ENCODE measurements at regions of chr1 and their contacts with region 1.

Region 1: DNA sequence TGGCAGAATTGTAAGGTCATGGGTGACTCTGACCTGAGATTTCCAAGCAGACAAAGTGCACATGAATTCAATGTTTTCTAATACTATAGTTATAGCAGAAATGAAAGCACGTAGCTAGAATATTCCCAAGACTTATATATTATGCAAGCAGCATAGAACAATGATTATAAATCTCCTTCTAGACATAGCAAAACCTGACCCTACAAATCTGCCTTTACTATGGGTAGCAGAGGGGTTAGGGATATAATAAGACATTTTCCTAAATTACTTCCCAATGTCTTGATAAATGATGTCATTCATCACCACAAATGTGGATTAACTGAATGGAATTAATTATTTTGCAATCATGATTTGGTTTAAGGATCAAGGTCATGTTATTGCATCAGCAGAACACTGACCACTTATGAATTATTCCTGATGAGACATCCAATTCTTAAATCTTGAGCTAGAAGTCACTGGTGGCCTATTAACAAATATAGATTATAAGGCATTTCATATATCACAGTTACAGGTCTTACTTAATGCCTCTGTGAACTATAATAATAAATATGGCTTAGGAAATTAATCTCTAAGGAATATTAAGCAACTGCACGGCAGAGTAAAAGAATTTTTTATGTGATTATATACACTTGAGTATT is 776.6 kb downstream of the AMY1C start:
- DNase-seq: no peak
- ATAC-seq: no peak
- H3K4me3 ChIP-seq: no peak overlapping the region
- H3K27ac ChIP-seq: no peak overlapping the region
- H3K4me1 ChIP-seq: no peaks in the 10 kb centered on the region
- H3K27me3 ChIP-seq: no peaks in the 10 kb centered on the region
- CTCF ChIP-seq: no peak
- EP300 ChIP-seq: no peak
- POLR2A ChIP-seq: no peak
- RAD21 ChIP-seq: no peak

Region 2: DNA sequence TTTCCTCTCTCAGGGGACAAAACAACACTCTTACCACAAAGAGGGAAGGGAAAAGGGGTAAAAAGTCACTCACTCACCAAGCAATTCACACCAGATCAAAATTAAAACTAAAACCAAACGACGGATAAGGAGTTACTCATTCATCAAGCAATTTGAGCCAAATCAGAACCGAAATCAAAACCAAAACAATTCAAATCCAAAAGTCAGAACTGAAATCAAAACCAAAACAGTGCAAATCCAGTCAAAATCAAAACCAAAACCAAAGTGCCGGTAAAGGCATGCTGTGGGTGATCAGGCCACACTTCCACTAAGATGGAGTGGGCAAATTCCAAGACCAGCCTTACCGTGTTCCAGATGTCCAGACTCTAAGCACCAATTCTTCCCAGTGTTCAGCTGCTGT is 58.7 kb before region 1 on chr1:
- CTCF ChIA-PET with region 1: no interaction called
- POLR2A ChIA-PET with region 1: no interaction called
- RAD21 ChIA-PET with region 1: no interaction called
- SMC1A ChIA-PET with region 1: no interaction called
- in situ Hi-C with region 1: no loop called
- intact Hi-C with region 1: no loop called
- DNase-seq: peak; percentile 23
- ATAC-seq: peak; percentile 77
- H3K4me3 ChIP-seq: no peak overlapping the region
- H3K27ac ChIP-seq: no peak overlapping the region
- H3K4me1 ChIP-seq: no peaks in the 10 kb centered on the region
- H3K27me3 ChIP-seq: no peaks in the 10 kb centered on the region
- CTCF ChIP-seq: no peak
- EP300 ChIP-seq: no peak
- POLR2A ChIP-seq: no peak
- RAD21 ChIP-seq: no peak

Region 3: GRCh38 chr1:104574619-104575018 is 48.3 kb after region 1 on chr1:
- CTCF ChIA-PET with region 1: no interaction called
- POLR2A ChIA-PET with region 1: no interaction called
- RAD21 ChIA-PET with region 1: no interaction called
- SMC1A ChIA-PET with region 1: no interaction called
- in situ Hi-C with region 1: no loop called
- intact Hi-C with region 1: loop called (anchors 5 kb)
- DNase-seq: no peak
- ATAC-seq: no peak
- H3K4me3 ChIP-seq: no peak overlapping the region
- H3K27ac ChIP-seq: no peak overlapping the region
- H3K4me1 ChIP-seq: no peaks in the 10 kb centered on the region
- H3K27me3 ChIP-seq: no peaks in the 10 kb centered on the region
- CTCF ChIP-seq: no peak
- EP300 ChIP-seq: no peak
- POLR2A ChIP-seq: no peak
- RAD21 ChIP-seq: no peak

Region 4: GRCh38 chr1:104706631-104707147 is 180.4 kb after region 1 on chr1:
- CTCF ChIA-PET with region 1: no interaction called
- POLR2A ChIA-PET with region 1: no interaction called
- RAD21 ChIA-PET with region 1: no interaction called
- SMC1A ChIA-PET with region 1: no interaction called
- in situ Hi-C with region 1: no loop called
- intact Hi-C with region 1: no loop called
- DNase-seq: peak; percentile 9
- ATAC-seq: peak; percentile 84
- H3K4me3 ChIP-seq: no peak overlapping the region
- H3K27ac ChIP-seq: no peak overlapping the region
- H3K4me1 ChIP-seq: no peaks in the 10 kb centered on the region
- H3K27me3 ChIP-seq: no peaks in the 10 kb centered on the region
- CTCF ChIP-seq: no peak
- EP300 ChIP-seq: no peak
- POLR2A ChIP-seq: no peak
- RAD21 ChIP-seq: no peak